ENCODE measurements at regions of chr1 and their contacts with region 1.

Region 1: GRCh38 chr1:27102707-27103491 is 52.0 kb downstream of the SLC9A1 start:
- DNase-seq: peak; percentile 81

Region 2: GRCh38 chr1:26932531-26932930 is 170.4 kb before region 1 on chr1:
- in situ Hi-C with region 1: no loop called
- DNase-seq: no peak

Region 3: DNA sequence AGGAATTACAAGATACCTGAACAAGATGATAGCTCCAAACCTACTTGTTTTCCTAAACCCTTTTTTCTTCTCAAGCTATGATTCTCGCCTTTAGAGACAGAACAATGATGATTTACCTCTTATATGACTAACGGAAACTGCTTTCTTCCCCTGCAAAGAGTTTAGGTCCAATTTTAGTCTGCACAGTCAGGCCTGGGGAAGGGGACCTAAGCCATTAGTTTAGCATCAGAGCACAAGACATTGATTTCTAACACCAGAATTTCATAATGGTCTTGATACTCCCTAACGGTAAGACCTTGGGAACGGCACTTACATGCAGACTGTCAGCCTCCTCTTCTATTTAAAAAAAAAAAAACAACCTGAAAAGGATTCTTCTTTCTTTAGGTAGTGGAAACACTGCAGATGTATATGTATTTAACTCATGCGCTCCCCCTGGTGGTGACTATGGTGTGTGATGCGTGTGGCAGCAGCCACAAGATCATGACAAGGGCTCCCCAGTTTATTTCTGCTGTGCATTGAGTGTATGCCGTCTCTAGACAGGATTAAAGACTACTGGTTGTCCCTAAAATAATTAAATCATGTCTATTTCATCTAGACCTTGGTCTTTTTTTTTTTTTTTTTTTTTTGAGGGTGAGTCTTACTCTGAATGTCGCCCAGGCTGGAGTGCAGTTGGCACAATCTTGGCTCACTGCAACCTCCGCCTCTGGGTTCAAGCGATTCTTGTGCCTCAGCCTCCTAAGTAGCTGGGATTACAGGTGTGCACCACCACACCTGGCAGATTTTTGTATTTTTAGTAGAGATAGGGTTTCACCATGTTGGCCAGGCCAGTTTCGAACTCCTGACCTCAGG is 181.8 kb after region 1 on chr1:
- in situ Hi-C with region 1: loop called (anchors 10 kb)
- DNase-seq: peak; percentile 79

Region 4: DNA sequence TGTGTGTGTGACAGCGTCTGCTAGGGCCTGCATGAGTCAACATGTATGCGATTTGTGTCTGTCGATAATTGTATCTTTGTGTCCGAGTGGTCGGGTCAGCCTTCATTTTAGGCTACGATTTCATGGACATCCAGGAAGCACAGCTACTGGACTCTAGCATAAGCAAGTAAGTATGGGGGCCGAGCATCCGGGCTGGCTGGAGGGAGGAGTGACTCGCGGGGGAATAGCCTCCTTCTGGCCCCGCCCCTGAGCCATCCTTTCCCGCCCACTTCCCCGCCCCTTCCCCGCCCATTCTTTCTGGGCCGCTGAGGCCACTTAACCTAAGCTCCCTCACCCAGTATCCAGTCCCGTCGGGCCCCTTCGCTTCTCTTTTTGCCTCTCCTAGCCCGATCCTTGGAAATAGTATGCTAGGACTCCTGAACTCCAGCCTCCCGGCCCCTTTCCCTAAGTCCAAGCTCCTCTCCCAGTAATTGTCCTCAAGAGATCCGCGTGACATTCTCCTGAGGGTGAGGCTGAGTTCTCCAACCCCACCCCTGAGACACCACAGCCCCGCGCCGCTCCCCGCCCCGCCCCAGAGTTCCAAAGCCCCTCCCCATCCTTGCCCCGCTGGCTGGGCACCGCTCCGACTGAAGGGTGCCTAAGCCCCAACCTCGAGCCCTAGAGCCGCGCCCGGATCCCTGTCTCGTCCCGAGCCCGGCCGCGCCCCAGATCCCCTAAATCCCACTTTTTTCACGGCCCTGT is 262.6 kb after region 1 on chr1:
- in situ Hi-C with region 1: no loop called
- DNase-seq: peak; percentile 88

Measured in KBM-7 (cell line).